Stomach (tissue), 19 donors: ENCODE measurements at regions of chr7 and their contacts with region 1.

Region 1: DNA sequence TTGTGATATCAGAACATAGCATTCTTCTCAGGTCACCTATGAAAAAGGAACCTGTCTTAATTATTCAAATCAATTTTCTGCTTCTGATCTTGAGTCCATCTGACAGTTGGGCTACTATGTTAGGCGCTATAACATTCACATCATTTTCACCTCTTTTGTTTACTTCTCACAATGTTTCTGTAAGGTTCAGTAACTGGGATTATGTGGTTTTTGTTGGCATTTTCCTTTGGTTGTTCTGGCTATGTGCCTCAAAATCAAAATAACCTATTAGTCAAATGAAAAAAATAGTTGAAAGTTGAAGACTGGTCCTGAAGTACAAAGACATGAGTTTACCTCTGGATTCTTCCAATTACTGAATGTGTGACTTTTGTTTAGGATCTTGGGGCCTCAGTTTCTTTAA is 221.3 kb upstream of the SMIM30 start:
- DNase-seq: no peak
- H3K4me3 ChIP-seq: no peak overlapping the region
- H3K27ac ChIP-seq: no peak overlapping the region
- H3K4me1 ChIP-seq: no peaks in the 10 kb centered on the region
- H3K27me3 ChIP-seq: no peaks in the 10 kb centered on the region
- CTCF ChIP-seq: no peak
- EP300 ChIP-seq: no peak
- POLR2A ChIP-seq: no peak

Region 2: GRCh38 chr7:113289140-113289740 is 50.4 kb before region 1 on chr7:
- intact Hi-C with region 1: loop called (anchors 10 kb)
- DNase-seq: peak in 1 of 2 donors; percentile 47
- H3K4me3 ChIP-seq: no peak overlapping the region
- H3K27ac ChIP-seq: no peak overlapping the region
- H3K4me1 ChIP-seq: no peaks in the 10 kb centered on the region
- H3K27me3 ChIP-seq: no peaks in the 10 kb centered on the region
- CTCF ChIP-seq: peak in 2 of 7 experiments; percentile 10 to 31
- EP300 ChIP-seq: no peak
- POLR2A ChIP-seq: no peak

Region 3: DNA sequence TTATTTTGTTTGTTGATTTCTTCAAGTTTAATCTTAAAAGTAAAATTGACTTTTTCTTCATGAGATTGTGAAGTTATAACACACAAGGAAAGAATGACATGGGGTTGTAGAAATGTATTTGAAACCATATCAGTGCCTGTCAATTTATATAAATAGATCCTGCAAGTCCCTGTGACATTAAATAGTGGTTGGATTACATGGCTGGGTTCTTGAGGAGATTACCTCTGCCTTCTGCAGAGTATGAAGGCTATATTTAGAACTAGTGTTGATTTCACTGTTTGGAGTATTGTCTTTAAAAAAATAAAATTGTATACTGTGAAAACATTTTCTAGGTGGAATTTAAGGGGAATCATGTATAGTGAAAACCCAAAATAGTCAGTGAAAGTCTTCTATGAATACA is 164.5 kb after region 1 on chr7:
- intact Hi-C with region 1: no loop called
- DNase-seq: no peak
- H3K4me3 ChIP-seq: no peak overlapping the region
- H3K27ac ChIP-seq: no peak overlapping the region
- H3K4me1 ChIP-seq: no peaks in the 10 kb centered on the region
- H3K27me3 ChIP-seq: no peaks in the 10 kb centered on the region
- CTCF ChIP-seq: no peak
- EP300 ChIP-seq: no peak
- POLR2A ChIP-seq: no peak